Sciatic nerve (tissue), 2 donors: ENCODE measurements at regions of chr6 and their contacts with region 1.

Region 1: DNA sequence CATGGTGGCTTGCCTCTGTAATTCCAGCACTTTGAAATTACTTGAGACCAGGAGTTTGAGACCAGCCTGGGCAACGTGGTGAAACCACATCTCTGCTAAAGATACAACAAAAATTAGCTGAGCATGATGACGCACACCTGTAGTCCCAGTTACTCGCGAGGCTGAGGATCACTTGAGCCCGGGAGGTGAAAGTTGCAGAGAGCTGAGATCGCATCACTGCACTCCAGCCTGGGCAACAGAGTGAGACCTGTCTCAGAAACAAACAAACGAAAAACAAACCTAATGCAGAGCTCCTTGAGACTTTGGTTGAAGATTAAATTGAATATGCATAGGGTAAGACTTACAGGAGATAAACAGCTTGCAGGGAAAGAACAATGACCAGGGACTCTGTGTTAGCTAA is 80.8 kb downstream of the SCAF8 start:
- DNase-seq: no peak
- ATAC-seq: no peak

Region 2: DNA sequence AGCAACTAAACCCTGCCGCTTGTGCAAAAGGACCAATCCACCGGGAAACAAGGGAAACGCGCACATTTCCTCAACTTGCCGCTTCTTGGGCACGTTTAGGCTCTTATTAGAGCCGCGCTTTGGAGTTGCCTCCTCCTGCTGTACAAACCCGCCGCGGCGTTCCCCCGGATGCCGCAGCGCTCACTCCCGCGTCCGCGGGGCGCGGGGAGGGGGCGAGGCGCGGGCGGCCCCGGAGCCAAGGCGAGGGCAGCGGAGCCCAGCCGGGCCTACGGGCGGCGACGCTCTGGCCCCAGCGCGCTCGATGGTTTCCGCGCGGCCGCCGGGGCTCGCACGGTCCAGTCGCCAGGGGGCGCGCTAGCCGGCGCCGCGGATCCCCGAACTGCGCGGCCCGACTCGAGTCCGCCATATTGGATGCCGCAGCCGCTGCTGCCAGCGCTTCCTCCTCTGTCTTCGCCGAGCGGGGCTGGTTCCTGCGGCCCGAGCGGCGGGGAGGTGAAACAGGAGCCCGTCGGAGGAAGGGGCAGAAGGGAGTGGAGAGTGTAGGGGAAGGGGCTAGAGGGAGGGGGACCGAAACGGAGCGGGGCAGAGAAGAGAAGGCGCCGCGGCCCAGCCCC is 80.9 kb before region 1 on chr6 and contains the start of gene SCAF8:
- intact Hi-C with region 1: loop called (anchors 10 kb)
- DNase-seq: peak; percentile 90
- ATAC-seq: peak; percentile 86
- total RNA-seq, gene SCAF8: 63.4 TPM

Region 3: GRCh38 chr6:154791556-154792317 is 22.3 kb before region 1 on chr6:
- intact Hi-C with region 1: no loop called
- DNase-seq: no peak
- ATAC-seq: no peak

Region 4: GRCh38 chr6:155882527-155883333 is 1068.7 kb after region 1 on chr6:
- intact Hi-C with region 1: no loop called
- DNase-seq: no peak
- ATAC-seq: no peak